Heart left ventricle (tissue), 16 donors: ENCODE measurements at regions of chr19 and their contacts with region 1.

Region 1: GRCh38 chr19:6238643-6239281 is 41.0 kb downstream of the MLLT1 start:
- DNase-seq: peak in 4 of 5 donors; percentile 60 to 85 (median 64)
- ATAC-seq: peak in 3 of 4 donors; percentile 20 to 56 (median 47)
- H3K4me3 ChIP-seq: peak overlapping the region in 7 of 12 donors; percentile 4 to 22 (median 12)
- H3K27ac ChIP-seq: peak overlapping the region; percentile 47 to 92 (median 75)
- H3K4me1 ChIP-seq: peaks cover 24 to 98% (median 81%) of the 10 kb centered on the region in 12 donors
- H3K27me3 ChIP-seq: no peaks in the 10 kb centered on the region
- CTCF ChIP-seq: peak in 3 of 12 donors; percentile 3 to 8 (median 3)
- POLR2A ChIP-seq: no peak

Region 2: GRCh38 chr19:6273701-6274601 is 35.2 kb after region 1 on chr19:
- intact Hi-C with region 1: loop called in 9 of 10 experiments (anchors 2 to 5 kb)
- DNase-seq: peak; percentile 70 to 93 (median 88)
- ATAC-seq: peak; percentile 48 to 80 (median 70)
- H3K4me3 ChIP-seq: peak overlapping the region in 11 of 12 donors; percentile 1 to 46 (median 32)
- H3K27ac ChIP-seq: peak overlapping the region; percentile 71 to 95 (median 88)
- H3K4me1 ChIP-seq: peaks cover 46 to 97% (median 82%) of the 10 kb centered on the region in 12 donors
- H3K27me3 ChIP-seq: no peaks in the 10 kb centered on the region
- CTCF ChIP-seq: no peak
- POLR2A ChIP-seq: no peak

Region 3: DNA sequence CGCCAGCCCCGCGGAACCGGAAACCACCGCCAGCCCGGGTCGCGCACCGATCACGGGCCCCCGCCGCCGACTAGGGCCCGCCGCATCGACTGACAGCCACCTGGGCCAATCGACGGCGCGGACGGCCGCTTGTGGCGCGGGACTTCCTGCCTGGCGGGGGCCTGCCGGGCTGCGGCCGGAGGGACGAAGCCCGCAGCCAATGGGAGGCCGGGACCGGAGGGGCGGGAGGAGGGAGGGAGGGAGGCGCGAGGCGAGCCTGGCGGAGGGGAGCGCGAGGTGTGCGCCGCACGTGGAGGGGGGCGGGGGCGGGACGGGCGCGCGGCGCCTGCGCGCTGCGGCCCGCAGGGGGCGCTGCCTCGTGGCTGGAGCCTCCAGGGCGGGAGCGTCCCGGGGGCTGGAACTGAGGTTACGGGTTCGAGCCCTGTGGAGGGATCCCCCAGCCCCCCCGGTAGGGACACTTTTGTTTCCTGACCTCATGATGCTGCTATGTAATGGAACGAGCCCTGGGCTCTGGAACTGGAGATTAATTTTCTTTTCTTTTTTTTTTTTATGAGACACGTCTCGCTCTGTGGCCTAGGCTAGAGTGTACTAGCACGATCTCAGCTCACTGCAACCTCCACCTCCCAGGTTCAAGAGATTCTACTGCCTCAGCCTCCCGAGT is 41.3 kb after region 1 on chr19 and contains the start of gene MLLT1:
- intact Hi-C with region 1: loop called in 2 of 10 experiments (anchors 2 to 5 kb)
- DNase-seq: peak; percentile 98 to 99 (median 98)
- ATAC-seq: peak; percentile 93 to 99 (median 98)
- H3K4me3 ChIP-seq: peak within 1 kb of the TSS; percentile 50 to 97 (median 84)
- H3K27ac ChIP-seq: peak within 1 kb of the TSS in 11 of 12 donors; percentile 44 to 90 (median 81)
- H3K4me1 ChIP-seq: peaks cover 8 to 48% (median 37%) of the 10 kb centered on the region in 12 donors
- H3K27me3 ChIP-seq: no peaks in the 10 kb centered on the region
- CTCF ChIP-seq: peak; percentile 56 to 91 (median 82)
- POLR2A ChIP-seq: peak in 1 of 2 donors; percentile 46
- total RNA-seq, gene MLLT1: 21.0 to 45.9 (median 34.9) TPM

Region 4: DNA sequence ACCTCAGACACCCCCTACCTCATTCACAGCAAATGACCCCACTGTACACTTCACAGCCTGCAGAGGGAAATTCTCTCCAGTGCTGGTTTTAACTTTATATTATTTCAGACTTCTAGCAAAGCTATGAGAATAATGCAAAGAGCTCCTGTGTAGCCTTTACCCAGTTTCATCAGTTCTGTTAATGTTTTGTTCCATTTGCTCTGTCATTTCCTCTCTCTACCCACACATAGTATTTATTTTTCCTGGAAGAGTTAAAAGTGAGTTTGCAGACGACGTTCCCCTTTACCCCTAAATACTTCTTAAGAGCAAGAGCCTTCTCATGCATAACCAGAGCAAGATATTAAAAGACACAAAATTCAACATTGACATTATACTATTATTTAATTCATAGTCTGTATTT is 598.8 kb after region 1 on chr19:
- intact Hi-C with region 1: no loop called
- DNase-seq: no peak
- ATAC-seq: no peak
- H3K4me3 ChIP-seq: no peak overlapping the region
- H3K27ac ChIP-seq: no peak overlapping the region
- H3K4me1 ChIP-seq: no peaks in the 10 kb centered on the region
- H3K27me3 ChIP-seq: peaks cover 0 to 4% (median 0%) of the 10 kb centered on the region in 9 donors
- CTCF ChIP-seq: no peak
- POLR2A ChIP-seq: no peak